HepG2 (cell line): ENCODE measurements at regions of chr13 and their contacts with region 1.

Region 1: GRCh38 chr13:67238277-67238859 is 8.2 kb upstream of the PCDH9 start:
- DNase-seq: peak; percentile 16
- ATAC-seq: no peak
- H3K4me3 ChIP-seq: no peak overlapping the region
- H3K27ac ChIP-seq: no peak overlapping the region
- H3K4me1 ChIP-seq: no peaks in the 10 kb centered on the region
- H3K27me3 ChIP-seq: no peaks in the 10 kb centered on the region
- CTCF ChIP-seq: peak; percentile 44
- EP300 ChIP-seq: no peak
- POLR2A ChIP-seq: no peak
- RAD21 ChIP-seq: peak; percentile 13; the same call in 1 of the 2 replicates

Region 2: DNA sequence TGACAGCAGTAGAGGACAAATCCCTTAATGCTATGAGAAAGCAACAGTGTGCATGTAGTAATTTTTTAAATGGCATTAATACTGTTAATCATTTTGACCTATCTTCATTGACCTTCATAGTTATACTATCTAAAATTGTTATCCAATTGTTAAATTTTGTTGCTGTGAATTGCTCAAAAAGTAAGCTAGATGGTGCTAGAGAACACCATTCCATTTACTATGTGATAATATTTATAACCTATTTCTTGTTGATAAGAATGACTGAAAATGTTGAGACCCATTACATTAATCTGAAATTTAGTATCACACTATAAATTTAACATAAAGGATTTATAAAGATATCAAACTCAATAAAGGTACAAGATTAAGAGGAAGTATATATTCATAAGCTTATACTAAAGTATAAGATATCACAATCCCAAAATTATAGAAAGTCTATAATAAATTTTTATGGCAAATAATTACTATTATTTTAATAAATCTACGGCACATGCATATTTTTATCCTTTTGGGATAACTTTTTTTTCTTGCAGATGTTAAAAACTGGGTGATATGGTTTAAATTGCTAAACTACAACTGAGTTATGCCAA is 1581.5 kb before region 1 on chr13:
- CTCF ChIA-PET with region 1: interaction called, 4 read pairs
- POLR2A ChIA-PET with region 1: no interaction called
- in situ Hi-C with region 1: no loop called
- intact Hi-C with region 1: loop called (anchors 5 kb)
- DNase-seq: no peak
- ATAC-seq: no peak
- H3K4me3 ChIP-seq: no peak overlapping the region
- H3K27ac ChIP-seq: no peak overlapping the region
- H3K4me1 ChIP-seq: no peaks in the 10 kb centered on the region
- H3K27me3 ChIP-seq: no peaks in the 10 kb centered on the region
- CTCF ChIP-seq: 0 out of 2 replicates have a peak, but pooled peaks have one; percentile 13
- EP300 ChIP-seq: no peak
- POLR2A ChIP-seq: no peak
- RAD21 ChIP-seq: no peak

Region 3: DNA sequence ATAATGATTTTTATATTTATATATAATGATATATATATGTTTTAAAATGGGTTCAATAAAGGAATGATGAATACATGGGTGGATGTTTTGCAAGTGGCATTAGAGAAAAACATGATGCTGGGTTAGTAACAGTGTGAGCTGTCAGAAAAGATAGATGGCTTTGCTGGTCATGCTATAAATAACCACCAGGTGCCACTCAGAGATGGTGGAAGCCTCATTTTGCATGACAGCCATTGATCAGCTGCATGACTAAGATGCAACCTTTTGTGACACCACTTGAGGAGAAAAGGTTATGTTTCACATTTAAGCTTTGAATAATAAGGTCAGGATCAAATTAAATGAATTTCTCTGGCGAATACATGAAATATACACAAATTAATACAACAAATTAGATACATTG is 745.9 kb before region 1 on chr13:
- CTCF ChIA-PET with region 1: no interaction called
- POLR2A ChIA-PET with region 1: no interaction called
- in situ Hi-C with region 1: no loop called
- intact Hi-C with region 1: loop called (anchors 5 kb)
- DNase-seq: peak; percentile 3
- ATAC-seq: peak; percentile 70
- H3K4me3 ChIP-seq: no peak overlapping the region
- H3K27ac ChIP-seq: no peak overlapping the region
- H3K4me1 ChIP-seq: no peaks in the 10 kb centered on the region
- H3K27me3 ChIP-seq: no peaks in the 10 kb centered on the region
- CTCF ChIP-seq: 0 out of 2 replicates have a peak, but pooled peaks have one; percentile 6
- EP300 ChIP-seq: no peak
- POLR2A ChIP-seq: no peak
- RAD21 ChIP-seq: no peak

Region 4: DNA sequence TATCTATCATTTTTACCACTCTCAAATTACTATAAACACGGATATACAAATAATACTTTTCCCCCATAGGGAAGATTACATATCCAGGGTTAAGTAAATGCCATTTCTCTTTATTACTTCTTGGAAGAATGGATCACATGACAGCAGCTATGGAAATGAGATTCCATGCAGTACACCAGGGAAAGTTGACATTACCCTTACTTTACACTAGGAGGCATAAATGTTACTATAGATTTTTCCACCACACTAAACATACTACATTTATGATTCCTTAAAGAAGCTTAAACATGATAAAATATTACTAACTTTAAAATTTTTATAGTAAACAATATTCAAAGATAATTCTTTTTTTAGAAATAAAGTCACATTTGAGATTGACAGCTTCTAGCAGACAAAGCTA is 619.7 kb before region 1 on chr13:
- CTCF ChIA-PET with region 1: interaction called, 3 read pairs
- POLR2A ChIA-PET with region 1: no interaction called
- in situ Hi-C with region 1: no loop called
- intact Hi-C with region 1: loop called (anchors 1 kb)
- DNase-seq: peak; percentile 5
- ATAC-seq: peak; percentile 65; the same call in 2 of the 3 replicates
- H3K4me3 ChIP-seq: no peak overlapping the region
- H3K27ac ChIP-seq: no peak overlapping the region
- H3K4me1 ChIP-seq: no peaks in the 10 kb centered on the region
- H3K27me3 ChIP-seq: no peaks in the 10 kb centered on the region
- CTCF ChIP-seq: 0 out of 2 replicates have a peak, but pooled peaks have one; percentile 15
- EP300 ChIP-seq: no peak
- POLR2A ChIP-seq: no peak
- RAD21 ChIP-seq: no peak